A673 (cell line): ENCODE measurements at regions of chr14 and their contacts with region 1.

Region 1: DNA sequence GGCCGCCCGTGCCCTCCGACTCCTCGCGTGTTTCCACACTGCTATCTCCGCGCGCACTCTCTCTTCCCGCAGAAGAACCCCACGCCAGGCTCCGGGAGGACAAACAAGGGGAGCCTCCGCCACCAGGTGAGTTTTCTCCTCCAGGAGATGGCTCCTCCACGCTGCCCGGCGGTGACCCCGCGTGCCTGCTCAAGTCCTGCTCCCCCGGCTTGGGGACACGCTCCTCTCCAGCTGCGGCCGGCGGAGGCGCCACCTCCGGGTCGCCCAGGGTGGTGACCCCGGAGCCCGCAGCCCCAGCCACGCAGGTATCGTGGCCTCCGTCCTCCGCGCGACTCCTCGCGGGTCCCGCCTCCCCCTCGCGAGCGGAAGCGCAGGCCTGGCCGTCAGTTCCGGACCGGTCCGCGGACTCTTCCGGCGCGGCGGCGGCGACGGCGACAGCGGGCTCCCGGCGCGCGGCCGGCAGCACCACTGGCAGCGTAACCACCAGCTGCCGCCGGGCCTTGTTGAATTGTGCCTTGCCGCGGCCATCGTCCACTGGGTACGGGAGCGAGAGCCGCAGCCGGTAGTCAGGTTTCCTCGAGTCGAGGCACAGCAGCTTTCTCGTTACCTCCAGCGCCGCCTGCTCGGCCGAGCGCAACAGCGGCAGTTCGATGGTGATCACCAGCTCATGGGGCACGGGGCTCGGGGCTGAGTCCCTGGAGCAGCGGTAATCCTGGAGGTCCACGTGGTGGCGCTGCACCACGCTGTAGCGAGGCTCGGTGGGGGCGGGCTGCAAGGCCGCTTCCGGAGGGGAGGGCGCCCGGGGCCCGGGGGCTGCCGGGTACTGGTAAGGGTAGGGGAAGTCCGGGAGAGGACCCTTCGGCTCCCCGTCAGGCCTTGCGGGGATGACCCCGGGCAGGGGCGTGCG is 1.2 kb downstream of the DNAAF2 start:
- DNase-seq: peak; percentile 98
- H3K4me3 ChIP-seq: peak overlapping the region; percentile 95
- H3K27ac ChIP-seq: peak overlapping the region; percentile 96
- H3K4me1 ChIP-seq: peaks cover 14% of the 10 kb centered on the region
- H3K27me3 ChIP-seq: no peaks in the 10 kb centered on the region
- CTCF ChIP-seq: peak; percentile 99

Region 2: DNA sequence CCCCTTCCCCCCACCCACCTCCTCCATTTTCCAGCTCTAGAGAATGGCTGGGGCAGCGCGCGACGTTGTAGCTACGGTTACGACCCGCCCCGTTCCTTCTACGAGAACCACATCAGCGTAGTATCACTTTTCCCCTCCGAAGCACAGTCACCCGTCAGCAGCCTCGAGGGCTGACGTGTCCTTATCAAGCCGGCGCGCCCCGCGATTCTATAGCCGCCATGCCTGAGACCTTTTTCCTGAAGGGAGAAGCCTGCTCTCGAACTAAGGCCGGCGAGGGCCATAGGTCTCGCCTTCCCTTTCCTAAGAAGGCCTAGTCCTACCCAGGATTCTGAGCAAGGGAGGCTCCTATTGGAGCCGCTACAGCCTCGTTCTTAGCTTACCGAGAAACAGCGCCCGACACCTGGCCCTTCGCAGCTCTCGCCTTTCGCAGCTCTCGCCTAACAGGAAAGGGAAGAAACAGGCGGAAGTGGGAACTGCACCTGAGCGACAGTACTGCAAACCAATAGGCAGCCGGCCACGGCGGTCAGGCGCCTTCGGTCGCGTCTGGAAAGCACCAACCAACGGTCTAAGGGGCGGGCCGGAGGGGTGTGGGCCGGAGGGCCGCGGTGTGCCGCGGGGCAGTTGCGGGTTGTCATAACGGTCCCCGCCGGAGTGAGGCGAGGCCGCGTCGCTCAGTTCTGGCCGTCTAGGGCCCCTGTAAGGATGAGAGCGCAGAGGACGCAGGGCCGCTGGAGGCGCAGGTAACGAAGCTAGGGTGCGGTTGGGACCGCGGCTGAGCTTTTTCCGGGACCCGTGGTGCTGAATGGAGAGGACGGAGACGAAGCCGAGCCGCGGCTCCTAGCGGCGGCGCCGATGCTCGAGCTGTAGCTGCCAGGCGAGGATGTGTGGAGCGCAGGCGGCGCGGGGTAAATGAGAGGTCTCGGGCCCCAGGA is 13.4 kb before region 1 on chr14 and contains the starts of genes MGAT2 and RPL36AL:
- CTCF ChIA-PET with region 1: interaction called, 16 read pairs
- POLR2A ChIA-PET with region 1: interaction called, 3 read pairs
- intact Hi-C with region 1: no loop called
- DNase-seq: peak; percentile 98
- H3K4me3 ChIP-seq: peak within 1 kb of the TSS; percentile 93
- H3K27ac ChIP-seq: peak within 1 kb of the TSS; percentile 95
- H3K4me1 ChIP-seq: peaks cover 22% of the 10 kb centered on the region
- H3K27me3 ChIP-seq: no peaks in the 10 kb centered on the region
- CTCF ChIP-seq: peak; percentile 44; the same call in 1 of the 2 replicates
- total RNA-seq, gene MGAT2: 35.9 and 37.3 TPM in 2 replicates
- total RNA-seq, gene RPL36AL: 188 and 202 TPM in 2 replicates

Region 3: GRCh38 chr14:49767562-49768300 is 133.8 kb after region 1 on chr14 and contains the start of gene KLHDC2:
- CTCF ChIA-PET with region 1: interaction called, 23 read pairs
- POLR2A ChIA-PET with region 1: no interaction called
- intact Hi-C with region 1: loop called (anchors 2 kb)
- DNase-seq: peak; percentile 93
- H3K4me3 ChIP-seq: peak within 1 kb of the TSS; percentile 99
- H3K27ac ChIP-seq: peak within 1 kb of the TSS; percentile 98
- H3K4me1 ChIP-seq: no peaks in the 10 kb centered on the region
- H3K27me3 ChIP-seq: no peaks in the 10 kb centered on the region
- CTCF ChIP-seq: peak; percentile 59; the same call in 1 of the 2 replicates
- total RNA-seq, gene KLHDC2: 34.0 and 39.6 TPM in 2 replicates

Region 4: DNA sequence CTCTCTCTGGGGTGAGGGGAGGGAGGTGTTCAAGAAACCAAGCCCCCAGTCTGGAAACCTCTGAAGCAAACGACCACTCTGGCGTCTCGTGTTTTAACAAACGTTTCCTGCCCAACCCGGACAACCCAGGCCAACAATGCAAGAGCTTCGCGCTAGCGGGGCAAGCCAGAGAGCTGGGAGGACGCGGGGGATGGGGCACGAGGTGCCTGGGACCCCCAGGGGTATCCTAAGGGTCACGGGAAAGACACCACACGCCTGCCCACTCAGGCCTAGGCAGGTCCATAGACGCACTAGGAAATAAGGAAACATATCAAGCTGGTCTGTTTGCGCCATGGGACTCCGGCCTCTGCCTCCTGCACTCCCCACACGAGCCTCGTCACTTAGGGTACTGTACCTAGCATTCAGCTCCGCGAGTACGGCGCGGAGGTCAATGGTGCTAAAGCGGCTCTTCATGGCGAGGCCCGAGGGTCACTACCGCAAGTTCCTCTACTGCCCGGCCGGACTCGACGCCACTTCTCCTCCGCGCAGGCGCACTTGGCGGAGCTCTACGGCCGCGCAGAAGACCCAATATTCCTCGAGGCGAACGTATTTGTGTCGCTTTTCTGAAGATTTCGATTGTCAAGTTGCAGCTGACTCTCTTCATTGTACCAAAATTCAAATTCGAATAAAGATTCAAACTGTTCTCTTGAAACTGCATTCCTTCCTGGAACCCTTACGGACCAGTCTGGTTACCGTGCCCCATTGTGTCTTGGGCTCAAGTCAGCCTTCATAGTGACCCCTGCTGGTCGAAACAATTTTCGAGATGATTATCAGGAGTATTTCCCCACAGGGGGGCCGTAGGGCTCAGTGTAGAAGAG is 218.6 kb after region 1 on chr14 and contains the start of gene NEMF:
- CTCF ChIA-PET with region 1: interaction called, 6 read pairs
- POLR2A ChIA-PET with region 1: no interaction called
- intact Hi-C with region 1: loop called (anchors 5 kb)
- DNase-seq: peak; percentile 95
- H3K4me3 ChIP-seq: peak within 1 kb of the TSS; percentile 86
- H3K27ac ChIP-seq: peak within 1 kb of the TSS; percentile 87
- H3K4me1 ChIP-seq: peaks cover 10% of the 10 kb centered on the region
- H3K27me3 ChIP-seq: no peaks in the 10 kb centered on the region
- CTCF ChIP-seq: peak; percentile 92
- total RNA-seq, gene NEMF: 77.5 and 80.2 TPM in 2 replicates

Region 5: DNA sequence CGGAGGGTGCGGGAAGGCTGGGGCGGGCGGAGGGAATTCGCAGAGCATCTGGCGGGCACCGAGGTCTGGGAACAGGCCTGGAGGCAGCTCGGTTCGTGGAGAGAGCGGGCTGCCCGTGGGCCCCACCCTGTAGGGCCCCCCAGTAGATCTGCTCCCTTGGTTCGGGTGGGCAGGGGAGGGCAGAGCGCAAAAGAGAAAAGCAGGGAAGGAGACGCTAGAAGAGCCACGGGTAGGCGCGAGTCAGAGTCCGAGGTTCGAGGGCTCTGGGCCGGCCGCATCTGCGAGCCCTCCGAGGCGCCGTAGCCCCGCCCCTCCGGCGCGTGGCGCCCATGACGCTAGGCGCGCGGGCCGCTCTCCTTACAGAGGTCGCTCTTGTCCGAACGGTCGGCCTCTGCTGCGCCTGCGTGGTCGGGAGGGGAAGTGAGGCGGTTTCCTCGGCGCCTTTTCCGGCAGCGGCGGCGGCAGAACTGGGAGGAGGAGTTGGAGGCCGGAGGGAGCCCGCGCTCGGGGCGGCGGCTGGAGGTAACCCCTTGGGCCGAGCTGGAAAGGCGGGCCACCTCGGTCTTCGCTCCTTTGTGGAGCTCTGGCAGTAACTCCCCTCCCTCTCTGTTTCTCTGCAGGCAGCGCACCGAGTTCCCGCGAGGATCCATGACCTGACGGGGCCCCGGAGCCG is 258.9 kb after region 1 on chr14 and contains the start of gene ARF6:
- CTCF ChIA-PET with region 1: no interaction called
- POLR2A ChIA-PET with region 1: no interaction called
- intact Hi-C with region 1: no loop called
- DNase-seq: peak; percentile 98
- H3K4me3 ChIP-seq: peak within 1 kb of the TSS; percentile 84
- H3K27ac ChIP-seq: peak within 1 kb of the TSS; percentile 99
- H3K4me1 ChIP-seq: peaks cover 15% of the 10 kb centered on the region
- H3K27me3 ChIP-seq: no peaks in the 10 kb centered on the region
- CTCF ChIP-seq: no peak; the same call in 1 of the 2 replicates
- total RNA-seq, gene ARF6: 59.2 and 67.6 TPM in 2 replicates

Region 6: DNA sequence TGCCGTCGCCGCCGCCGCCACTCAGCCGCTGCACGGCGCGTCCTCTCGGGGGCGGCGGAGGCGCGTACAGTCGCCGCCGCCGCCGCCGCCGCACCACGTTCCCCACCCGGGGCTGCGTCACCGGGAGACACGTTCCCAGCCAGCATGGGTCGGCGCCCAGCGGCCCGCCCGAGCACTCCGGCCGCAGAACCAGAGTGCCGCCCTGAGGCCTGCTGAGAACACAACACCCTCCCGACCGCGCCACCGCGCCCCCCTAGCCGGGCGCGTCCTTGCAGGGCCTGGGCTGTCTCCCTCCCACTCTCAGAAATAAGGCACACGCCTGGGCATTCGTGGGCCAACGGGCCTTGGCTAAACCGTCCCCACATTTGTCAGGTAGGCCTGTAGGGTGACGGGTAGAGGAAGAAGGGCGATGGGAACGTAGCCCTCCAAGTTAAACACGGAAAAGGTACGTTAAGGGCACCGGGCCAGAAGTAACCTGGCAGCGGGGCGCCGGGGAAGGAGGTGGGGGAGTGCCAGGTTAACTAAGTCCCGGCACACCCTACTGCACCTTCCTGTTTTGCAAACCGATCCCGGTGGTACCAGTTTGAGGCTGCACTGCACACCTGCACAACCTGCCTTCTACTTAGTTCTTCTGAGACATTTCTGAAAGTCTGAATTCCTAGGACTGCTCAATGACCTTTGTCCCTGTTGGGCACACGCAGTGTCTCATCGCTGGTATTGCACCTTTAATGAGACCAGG is 898.8 kb after region 1 on chr14 and contains the start of gene MAP4K5:
- CTCF ChIA-PET with region 1: no interaction called
- POLR2A ChIA-PET with region 1: no interaction called
- intact Hi-C with region 1: loop called (anchors 2 kb)
- DNase-seq: peak; percentile 95
- H3K4me3 ChIP-seq: peak within 1 kb of the TSS; percentile 91
- H3K27ac ChIP-seq: peak within 1 kb of the TSS; percentile 90
- H3K4me1 ChIP-seq: peaks cover 18% of the 10 kb centered on the region
- H3K27me3 ChIP-seq: no peaks in the 10 kb centered on the region
- CTCF ChIP-seq: peak; percentile 88
- total RNA-seq, gene MAP4K5: 57.9 and 58.9 TPM in 2 replicates